Heart left ventricle (tissue), 16 donors: ENCODE measurements at regions of chr5 and their contacts with region 1.

Region 1: GRCh38 chr5:172688349-172689217 is 47.5 kb downstream of the NEURL1B start:
- DNase-seq: peak in 3 of 5 donors; percentile 50 to 68 (median 61)
- ATAC-seq: peak; percentile 17 to 59 (median 52)
- H3K4me3 ChIP-seq: no peak overlapping the region
- H3K27ac ChIP-seq: peak overlapping the region in 11 of 12 donors; percentile 9 to 89 (median 74)
- H3K4me1 ChIP-seq: peaks cover 5 to 86% (median 71%) of the 10 kb centered on the region in 12 donors
- H3K27me3 ChIP-seq: no peaks in the 10 kb centered on the region
- CTCF ChIP-seq: no peak
- POLR2A ChIP-seq: no peak

Region 2: DNA sequence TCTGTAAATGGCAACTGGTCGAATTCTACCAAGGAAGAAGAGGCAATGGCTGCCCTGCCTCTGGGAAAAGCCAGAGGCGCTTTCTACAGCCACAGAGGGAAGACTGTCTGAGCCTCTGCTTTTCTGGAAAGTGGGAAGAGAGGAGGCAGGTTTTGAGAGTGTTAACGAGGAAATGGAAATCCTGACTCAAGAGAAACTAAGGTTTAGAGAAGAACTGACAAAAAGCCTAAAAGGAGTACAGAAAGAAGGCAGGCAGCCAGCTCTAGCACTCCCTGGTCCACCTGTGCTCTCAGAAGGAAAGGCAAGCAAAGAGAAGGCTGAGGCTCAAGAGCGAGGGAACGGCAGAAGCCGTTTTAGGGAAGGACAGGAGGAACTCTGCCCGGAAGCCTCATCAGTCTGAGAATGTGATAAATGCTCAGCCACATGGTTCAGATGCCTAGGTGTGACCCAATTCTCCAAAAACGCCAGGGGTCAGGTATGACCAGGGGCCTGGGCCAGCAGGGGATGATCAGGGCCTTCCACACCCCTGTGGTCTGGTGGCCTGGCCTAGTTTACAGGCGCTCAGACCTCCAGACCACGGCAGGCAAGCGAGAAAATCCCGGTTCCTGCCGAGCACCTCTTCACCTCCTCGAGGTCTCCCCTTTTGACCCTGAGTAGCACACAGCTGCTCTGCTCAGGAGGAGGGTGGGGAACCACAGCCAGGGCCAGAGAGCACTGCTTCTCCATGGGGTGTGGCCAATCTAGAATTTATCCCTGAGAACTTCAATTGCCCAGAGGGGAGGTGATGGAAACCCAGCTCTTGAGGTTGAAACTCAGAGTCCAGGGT is 602.2 kb before region 1 on chr5:
- intact Hi-C with region 1: no loop called
- DNase-seq: no peak
- ATAC-seq: peak in 1 of 4 donors; percentile 53
- H3K4me3 ChIP-seq: no peak overlapping the region
- H3K27ac ChIP-seq: no peak overlapping the region
- H3K4me1 ChIP-seq: no peaks in the 10 kb centered on the region
- H3K27me3 ChIP-seq: no peaks in the 10 kb centered on the region
- CTCF ChIP-seq: no peak
- POLR2A ChIP-seq: no peak

Region 3: GRCh38 chr5:172603251-172603806 is 85.3 kb before region 1 on chr5:
- intact Hi-C with region 1: loop called in 2 of 10 experiments (anchors 5 to 10 kb)
- DNase-seq: peak in 3 of 5 donors; percentile 59 to 68 (median 68)
- ATAC-seq: peak in 3 of 4 donors; percentile 17 to 68 (median 55)
- H3K4me3 ChIP-seq: peak overlapping the region in 5 of 12 donors; percentile 14 to 29 (median 17)
- H3K27ac ChIP-seq: peak overlapping the region; percentile 76 to 94 (median 83)
- H3K4me1 ChIP-seq: peaks cover 0 to 69% (median 37%) of the 10 kb centered on the region in 12 donors
- H3K27me3 ChIP-seq: no peaks in the 10 kb centered on the region
- CTCF ChIP-seq: no peak
- POLR2A ChIP-seq: no peak

Region 4: DNA sequence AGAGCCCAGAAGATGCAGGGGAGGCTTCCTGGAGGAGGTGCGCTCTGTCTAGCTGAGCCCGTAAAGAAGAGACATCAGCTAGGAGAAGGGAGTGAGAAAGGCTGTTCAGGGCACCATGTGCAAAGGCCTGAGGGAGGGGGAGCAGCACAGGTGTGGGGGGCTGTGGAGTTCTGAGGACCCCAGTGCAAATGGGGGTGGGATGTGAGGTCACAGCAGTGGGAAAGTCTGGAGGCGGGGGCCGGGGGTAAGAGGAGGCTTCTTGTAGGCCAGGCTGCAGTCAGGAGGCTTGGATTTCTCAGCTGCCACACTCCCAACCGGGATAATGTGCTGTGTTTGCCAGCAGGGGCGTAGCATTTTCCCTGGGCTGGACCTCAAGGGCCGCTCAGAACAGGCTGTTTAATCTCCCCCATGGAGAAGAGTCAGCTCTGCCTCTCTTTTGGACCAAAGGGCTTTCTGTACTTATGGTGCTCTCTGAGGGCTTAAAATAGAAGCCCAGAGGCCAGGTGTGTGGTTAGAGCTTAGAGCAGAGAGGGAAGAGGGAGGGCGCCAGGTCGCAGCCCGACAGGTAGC is 41.8 kb before region 1 on chr5:
- intact Hi-C with region 1: loop called in 5 of 10 experiments (anchors 5 to 10 kb)
- DNase-seq: peak in 4 of 5 donors; percentile 51 to 70 (median 61)
- ATAC-seq: peak; percentile 34 to 67 (median 54)
- H3K4me3 ChIP-seq: peak overlapping the region in 8 of 12 donors; percentile 73 to 98 (median 88)
- H3K27ac ChIP-seq: peak overlapping the region in 11 of 12 donors; percentile 68 to 99 (median 96)
- H3K4me1 ChIP-seq: peaks cover 4 to 94% (median 54%) of the 10 kb centered on the region in 12 donors
- H3K27me3 ChIP-seq: peaks cover 0 to 4% (median 0%) of the 10 kb centered on the region in 9 donors
- CTCF ChIP-seq: peak; percentile 12 to 60 (median 40)
- POLR2A ChIP-seq: no peak

Region 5: GRCh38 chr5:172659909-172660628 is 28.5 kb before region 1 on chr5:
- intact Hi-C with region 1: loop called in 1 of 10 experiments (anchors 5 kb)
- DNase-seq: peak; percentile 90 to 98 (median 94)
- ATAC-seq: peak; percentile 91 to 93 (median 92)
- H3K4me3 ChIP-seq: peak overlapping the region in 4 of 12 donors; percentile 0 to 27 (median 12)
- H3K27ac ChIP-seq: peak overlapping the region; percentile 75 to 98 (median 89)
- H3K4me1 ChIP-seq: peaks cover 19 to 93% (median 76%) of the 10 kb centered on the region in 12 donors
- H3K27me3 ChIP-seq: no peaks in the 10 kb centered on the region
- CTCF ChIP-seq: peak in 2 of 12 donors; percentile 22 to 33
- POLR2A ChIP-seq: no peak